ENCODE measurements at regions of chr9 and their contacts with region 1.

Region 1: DNA sequence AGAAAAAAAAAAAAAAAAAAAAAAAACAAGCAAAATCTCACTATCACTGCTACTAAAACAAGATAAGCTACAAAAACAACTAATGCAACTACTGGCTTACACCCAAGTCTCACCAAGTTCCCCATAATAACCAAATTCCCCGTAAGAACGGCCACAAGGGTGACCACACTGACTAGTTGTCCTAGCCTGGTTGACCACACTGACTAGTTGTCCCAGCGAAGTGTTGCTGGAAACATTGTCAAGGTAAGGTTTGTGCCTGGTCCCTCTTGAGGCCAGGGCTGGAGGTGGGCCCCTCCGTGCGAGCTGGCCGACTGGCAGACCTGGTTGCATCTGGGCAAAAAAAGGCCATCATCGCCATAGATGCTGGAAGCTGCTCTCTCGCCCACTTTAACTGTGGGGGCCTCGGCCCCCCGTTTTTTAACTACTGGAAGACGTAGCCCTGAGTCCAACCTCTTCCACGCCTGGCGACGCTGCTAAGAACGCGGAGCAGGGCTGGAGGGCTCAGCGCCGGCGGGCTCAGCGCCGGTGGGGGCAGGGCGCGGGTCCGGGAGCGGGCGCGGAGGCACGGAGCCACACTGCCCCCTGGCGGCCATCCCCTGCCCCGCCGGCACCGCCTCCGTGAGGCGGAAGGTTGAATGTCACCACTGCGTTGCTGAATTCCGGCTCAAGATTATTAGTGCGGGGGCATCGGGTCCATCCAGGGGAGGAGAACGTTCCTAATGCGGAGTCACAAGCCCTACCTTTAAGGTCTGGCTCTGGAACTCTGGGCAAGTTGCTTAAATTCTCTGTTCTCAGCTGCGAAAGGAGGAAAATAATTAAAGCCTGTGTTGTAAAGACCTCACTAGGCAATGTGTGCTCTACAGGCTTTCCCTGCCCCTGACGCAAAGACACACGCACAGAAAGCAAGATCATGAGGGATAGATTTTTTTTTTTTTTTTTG is 84.0 kb downstream of the HSD17B3 start:
- DNase-seq: peak; percentile 73
- H3K4me3 Mint-ChIP-seq: peak overlapping the region; percentile 57
- H3K27ac Mint-ChIP-seq: no peak overlapping the region
- H3K4me1 Mint-ChIP-seq: peaks cover 7% of the 10 kb centered on the region
- H3K27me3 Mint-ChIP-seq: peaks cover 49% of the 10 kb centered on the region

Region 2: DNA sequence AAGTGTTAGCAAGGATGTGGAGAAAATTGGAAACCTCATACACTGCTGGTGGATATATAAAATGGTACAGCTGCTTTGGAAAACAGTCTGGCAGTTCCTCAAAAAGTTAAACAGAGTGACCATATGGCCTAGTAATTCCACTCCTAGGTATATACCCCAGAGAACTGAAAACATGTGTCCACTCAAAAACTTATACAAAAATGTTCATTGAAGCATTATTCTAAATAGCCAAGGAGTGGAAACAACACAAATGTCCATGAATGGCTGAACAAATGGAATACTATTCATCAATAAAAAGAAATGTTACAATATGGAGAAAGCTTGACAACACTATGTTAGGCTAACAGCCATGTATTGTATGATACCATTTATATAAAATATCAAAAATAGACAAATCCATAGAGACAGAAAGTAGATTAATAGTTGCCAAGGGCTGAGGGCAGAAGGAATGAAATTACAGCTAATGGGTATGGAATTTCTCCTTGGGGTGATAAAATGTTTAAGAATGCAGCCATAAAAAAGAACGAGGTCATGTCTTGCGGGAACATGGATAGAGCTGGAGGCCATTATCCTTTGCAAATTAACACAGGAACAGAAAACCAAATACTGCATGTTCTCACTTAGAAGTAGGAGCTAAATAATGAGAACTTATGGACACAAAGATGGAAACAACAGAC is 1545.1 kb before region 1 on chr9:
- CTCF ChIA-PET with region 1: no interaction called
- intact Hi-C with region 1: loop called (anchors 10 kb)
- DNase-seq: no peak
- H3K4me3 Mint-ChIP-seq: no peak overlapping the region
- H3K27ac Mint-ChIP-seq: no peak overlapping the region
- H3K4me1 Mint-ChIP-seq: peaks cover 3% of the 10 kb centered on the region
- H3K27me3 Mint-ChIP-seq: no peaks in the 10 kb centered on the region

Region 3: GRCh38 chr9:94681508-94681907 is 1536.5 kb before region 1 on chr9:
- CTCF ChIA-PET with region 1: interaction called, 3 read pairs
- intact Hi-C with region 1: loop called (anchors 1 kb)
- DNase-seq: peak; percentile 74
- H3K4me3 Mint-ChIP-seq: no peak overlapping the region
- H3K27ac Mint-ChIP-seq: no peak overlapping the region
- H3K4me1 Mint-ChIP-seq: no peaks in the 10 kb centered on the region
- H3K27me3 Mint-ChIP-seq: peaks cover 2% of the 10 kb centered on the region

Region 4: DNA sequence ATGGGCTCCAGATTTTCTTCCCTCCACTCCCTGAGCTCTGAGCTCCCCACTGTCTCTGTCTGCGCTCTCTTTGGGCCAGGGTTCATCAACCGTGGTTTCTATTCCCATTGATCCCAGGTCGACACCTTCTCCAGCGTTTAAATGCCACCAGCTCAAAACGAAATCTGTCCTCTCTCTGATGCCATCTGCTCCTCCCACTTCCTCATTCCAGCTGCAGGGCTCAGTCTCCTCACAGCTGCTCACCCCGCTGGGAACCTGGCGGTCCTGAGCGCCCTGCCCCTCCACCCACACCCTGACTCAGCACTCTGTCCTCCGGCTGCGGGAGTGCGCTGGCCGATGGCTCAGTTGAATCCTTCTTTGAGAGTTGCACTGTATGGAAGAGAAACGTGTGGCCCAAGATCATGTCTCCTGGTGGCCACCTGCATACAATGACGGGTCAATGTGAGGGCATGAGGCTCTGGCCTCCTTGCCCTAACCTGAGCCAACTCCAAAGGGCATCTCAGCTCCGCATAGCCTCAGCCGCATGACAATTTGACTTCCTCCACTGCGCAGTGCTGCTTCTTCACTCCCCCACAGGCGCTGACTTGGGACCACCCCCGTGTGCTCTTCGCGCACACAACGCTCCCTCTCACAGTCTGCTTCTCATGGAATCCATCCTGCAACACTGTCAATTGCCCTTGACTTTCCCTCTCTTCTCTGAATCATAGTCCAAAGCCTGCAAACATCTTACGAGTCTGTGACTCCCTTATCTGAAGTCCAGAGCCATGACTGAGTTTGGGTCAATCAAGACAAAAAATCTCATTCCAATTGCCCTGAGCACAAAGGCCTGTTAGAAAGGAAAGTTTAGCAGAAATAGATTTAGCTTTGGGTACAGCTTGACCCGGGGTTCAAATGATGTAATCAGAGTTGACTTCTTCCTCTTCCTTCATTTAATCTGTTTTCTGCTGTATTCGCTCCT is 783.6 kb before region 1 on chr9:
- CTCF ChIA-PET with region 1: no interaction called
- intact Hi-C with region 1: loop called (anchors 2 kb)
- DNase-seq: no peak
- H3K4me3 Mint-ChIP-seq: no peak overlapping the region
- H3K27ac Mint-ChIP-seq: no peak overlapping the region
- H3K4me1 Mint-ChIP-seq: peaks cover 6% of the 10 kb centered on the region
- H3K27me3 Mint-ChIP-seq: no peaks in the 10 kb centered on the region

Region 5: DNA sequence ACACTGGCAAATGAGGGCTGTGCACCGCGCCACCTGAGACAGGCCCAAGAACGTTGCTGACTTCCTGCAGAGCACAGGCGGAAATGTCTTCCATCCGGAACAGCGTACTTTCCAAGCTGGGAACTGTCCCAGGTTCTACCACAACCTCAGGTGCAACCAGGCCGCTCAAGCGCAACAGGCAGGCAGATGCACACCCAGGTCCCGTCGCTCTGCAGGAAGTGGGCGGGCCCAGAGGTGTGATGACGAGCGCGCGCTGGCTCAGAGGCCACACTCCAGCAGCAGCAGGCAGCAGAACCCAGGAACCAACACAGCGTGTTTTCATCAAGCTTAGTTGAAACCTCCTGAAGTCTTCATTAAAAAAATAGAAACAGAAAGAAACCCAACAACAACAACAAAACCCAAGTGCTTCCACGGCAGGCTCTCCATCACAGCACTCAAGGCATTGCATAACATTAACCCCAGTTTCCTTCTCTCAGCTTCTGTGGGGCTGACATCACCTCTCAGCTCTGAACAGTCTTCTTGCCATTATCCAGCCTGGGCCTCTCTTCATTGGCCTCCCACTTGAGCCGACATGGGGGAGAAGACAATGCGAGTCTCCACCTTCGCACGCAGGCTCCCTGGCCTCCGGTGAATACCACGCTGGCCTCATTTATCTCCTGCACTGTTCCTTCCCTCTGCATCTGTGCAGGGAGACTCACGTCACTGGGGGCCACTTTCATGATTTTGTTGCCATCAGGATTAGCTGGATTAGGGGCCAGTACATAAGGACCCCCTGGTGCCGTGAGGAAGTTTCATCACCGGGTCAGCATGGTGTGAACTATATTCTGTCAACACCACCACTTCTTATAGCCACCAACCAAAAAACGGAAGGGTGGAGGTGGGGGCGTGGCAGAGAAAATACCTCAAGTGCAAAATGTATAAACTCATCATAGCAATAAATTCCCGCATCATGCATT is 723.3 kb before region 1 on chr9:
- CTCF ChIA-PET with region 1: no interaction called
- intact Hi-C with region 1: loop called (anchors 1 kb)
- DNase-seq: peak; percentile 92
- H3K4me3 Mint-ChIP-seq: peak overlapping the region; percentile 75
- H3K27ac Mint-ChIP-seq: peak overlapping the region; percentile 90
- H3K4me1 Mint-ChIP-seq: peaks cover 49% of the 10 kb centered on the region
- H3K27me3 Mint-ChIP-seq: no peaks in the 10 kb centered on the region

Region 6: GRCh38 chr9:95810135-95810534 is 407.9 kb before region 1 on chr9:
- CTCF ChIA-PET with region 1: no interaction called
- intact Hi-C with region 1: loop called (anchors 2 kb)
- DNase-seq: no peak
- H3K4me3 Mint-ChIP-seq: no peak overlapping the region
- H3K27ac Mint-ChIP-seq: no peak overlapping the region
- H3K4me1 Mint-ChIP-seq: peaks cover 25% of the 10 kb centered on the region
- H3K27me3 Mint-ChIP-seq: no peaks in the 10 kb centered on the region

Region 7: GRCh38 chr9:96061293-96061987 is 156.6 kb before region 1 on chr9:
- CTCF ChIA-PET with region 1: no interaction called
- intact Hi-C with region 1: loop called (anchors 5 kb)
- DNase-seq: peak; percentile 72
- H3K4me3 Mint-ChIP-seq: no peak overlapping the region
- H3K27ac Mint-ChIP-seq: no peak overlapping the region
- H3K4me1 Mint-ChIP-seq: peaks cover 8% of the 10 kb centered on the region
- H3K27me3 Mint-ChIP-seq: no peaks in the 10 kb centered on the region

Region 8: DNA sequence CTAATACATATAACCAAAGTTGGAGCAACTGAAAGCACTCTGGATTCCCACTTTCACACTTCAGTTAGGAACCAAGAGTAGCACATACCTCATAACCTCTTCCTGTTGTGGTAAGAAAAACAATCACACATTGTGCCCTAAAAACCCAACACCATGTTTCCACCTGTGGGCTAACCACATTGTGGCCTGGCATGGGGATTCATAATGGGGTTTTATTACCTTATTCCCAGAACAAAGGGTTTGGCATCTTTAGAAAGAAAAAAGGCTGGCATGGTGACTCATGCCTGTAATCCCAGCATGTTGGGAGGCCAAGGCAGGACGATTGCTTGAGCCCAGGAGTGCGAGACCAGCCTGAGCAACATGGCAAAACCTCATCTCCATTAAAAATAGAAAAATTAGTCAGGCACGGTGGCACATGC is 23.4 kb after region 1 on chr9:
- CTCF ChIA-PET with region 1: no interaction called
- intact Hi-C with region 1: no loop called
- DNase-seq: peak; percentile 83
- H3K4me3 Mint-ChIP-seq: no peak overlapping the region
- H3K27ac Mint-ChIP-seq: no peak overlapping the region
- H3K4me1 Mint-ChIP-seq: peaks cover 13% of the 10 kb centered on the region
- H3K27me3 Mint-ChIP-seq: peaks cover 23% of the 10 kb centered on the region